GM12878 (cell line): ENCODE measurements at regions of chr5 and their contacts with region 1.

Region 1: GRCh38 chr5:88729084-88729828 is 153.7 kb downstream of the MEF2C start:
- DNase-seq: peak; percentile 73
- ATAC-seq: peak; percentile 46
- H3K4me3 ChIP-seq: no peak overlapping the region
- H3K27ac ChIP-seq: no peak overlapping the region
- H3K4me1 ChIP-seq: peaks cover 34% of the 10 kb centered on the region
- H3K27me3 ChIP-seq: no peaks in the 10 kb centered on the region
- CTCF ChIP-seq: peak; percentile 54 to 77 (median 58); a peak in 5 of 6 replicates
- EP300 ChIP-seq: no peak
- POLR2A ChIP-seq: no peak
- RAD21 ChIP-seq: peak; percentile 85

Region 2: GRCh38 chr5:88769165-88769564 is 39.9 kb after region 1 on chr5:
- CTCF ChIA-PET with region 1: interaction called, 19 read pairs
- POLR2A ChIA-PET with region 1: no interaction called
- RAD21 ChIA-PET with region 1: interaction called, 4 read pairs
- SMC1A ChIA-PET with region 1: interaction called, 7 read pairs
- in situ Hi-C with region 1: no loop called
- intact Hi-C with region 1: no loop called
- DNase-seq: no peak
- ATAC-seq: no peak
- H3K4me3 ChIP-seq: no peak overlapping the region
- H3K27ac ChIP-seq: no peak overlapping the region
- H3K4me1 ChIP-seq: peaks cover 3% of the 10 kb centered on the region; the same call in 1 of the 2 replicates
- H3K27me3 ChIP-seq: no peaks in the 10 kb centered on the region
- CTCF ChIP-seq: no peak
- EP300 ChIP-seq: no peak
- POLR2A ChIP-seq: no peak
- RAD21 ChIP-seq: no peak

Region 3: DNA sequence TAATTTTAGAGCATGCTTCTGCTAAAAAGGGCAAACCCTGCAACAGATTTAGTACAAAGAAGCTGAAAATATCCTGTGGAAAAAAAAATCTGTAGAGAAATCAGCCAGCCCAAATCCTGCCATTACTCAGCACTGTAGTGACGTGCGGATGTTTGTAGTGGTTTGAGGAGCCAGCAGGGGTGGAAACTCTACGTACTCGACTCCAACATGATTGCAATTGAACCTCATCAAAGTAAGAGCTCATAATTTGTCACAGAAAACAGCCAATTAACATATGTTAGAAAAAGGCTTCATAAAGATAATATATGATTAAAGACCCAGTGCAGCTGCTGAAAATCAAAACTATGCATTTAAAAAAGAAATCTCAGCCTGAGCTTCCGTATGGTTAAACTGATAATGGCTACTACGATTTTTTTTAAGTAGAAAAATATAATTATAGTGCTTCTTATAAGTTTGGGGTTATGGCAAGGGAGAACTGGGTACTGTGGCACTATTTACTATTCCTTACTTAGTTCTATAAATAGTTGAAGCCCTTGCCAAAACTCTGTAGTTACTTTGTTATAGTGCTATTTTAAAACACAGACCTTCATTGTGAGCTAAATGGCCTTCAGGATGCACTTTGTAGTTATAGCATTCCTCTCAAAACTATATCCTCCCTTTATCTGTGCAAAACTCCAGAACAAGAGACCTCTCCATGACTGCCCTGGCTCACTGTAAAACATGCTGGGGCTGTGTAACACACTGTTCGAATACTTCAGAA is 104.3 kb after region 1 on chr5:
- CTCF ChIA-PET with region 1: interaction called, 35 read pairs
- POLR2A ChIA-PET with region 1: interaction called, 9 read pairs
- RAD21 ChIA-PET with region 1: interaction called, 594 read pairs
- SMC1A ChIA-PET with region 1: interaction called, 591 read pairs
- in situ Hi-C with region 1: loop called (anchors 10 kb)
- intact Hi-C with region 1: no loop called
- DNase-seq: no peak
- ATAC-seq: peak; percentile 65
- H3K4me3 ChIP-seq: peak overlapping the region; percentile 39; the same call in 1 of the 2 replicates
- H3K27ac ChIP-seq: peak overlapping the region; percentile 80
- H3K4me1 ChIP-seq: peaks cover 36% of the 10 kb centered on the region
- H3K27me3 ChIP-seq: no peaks in the 10 kb centered on the region
- CTCF ChIP-seq: no peak
- EP300 ChIP-seq: peak in 1 of 2 experiments; percentile 39; a peak in 1 of 4 replicates
- POLR2A ChIP-seq: no peak
- RAD21 ChIP-seq: no peak

Region 4: DNA sequence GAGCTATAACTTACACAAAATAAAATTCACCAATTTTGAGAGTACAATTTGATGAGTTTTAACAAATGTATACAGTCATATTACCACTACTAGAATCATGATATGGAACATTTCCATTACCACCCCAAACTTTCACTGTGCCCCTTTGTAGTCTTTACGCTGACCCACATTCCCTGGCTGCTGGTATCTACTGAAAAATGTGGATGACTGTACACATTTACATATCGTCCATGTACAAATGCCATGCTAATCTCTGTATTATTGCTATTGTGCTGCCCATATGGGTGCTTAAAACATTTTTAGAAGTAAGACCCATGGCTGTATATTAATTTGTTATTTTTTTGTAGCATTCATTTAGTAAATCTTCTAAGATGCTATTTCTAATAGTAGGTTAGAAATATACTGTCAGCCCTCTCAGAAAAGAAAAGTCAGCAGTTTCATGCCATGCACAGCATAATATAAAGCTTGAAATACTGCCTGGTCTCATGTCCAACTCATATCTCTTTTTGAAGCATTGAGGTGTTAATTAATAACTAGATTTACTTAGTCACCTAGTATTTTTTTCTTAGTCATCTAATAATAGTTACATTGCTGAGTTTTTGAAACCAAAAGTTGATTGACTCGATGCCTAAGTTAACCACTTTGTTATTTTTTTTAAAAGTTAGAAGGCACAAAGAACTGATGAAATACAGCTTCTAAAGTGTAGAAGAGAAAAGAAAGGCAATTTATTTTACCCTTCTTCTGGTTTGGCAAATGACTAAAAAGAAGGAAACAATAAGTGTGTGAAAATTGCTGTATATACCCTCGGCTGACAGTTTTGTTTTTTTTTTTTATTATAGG is 342.1 kb after region 1 on chr5:
- CTCF ChIA-PET with region 1: interaction called, 26 read pairs
- POLR2A ChIA-PET with region 1: interaction called, 4 read pairs
- RAD21 ChIA-PET with region 1: interaction called, 6 read pairs
- SMC1A ChIA-PET with region 1: interaction called, 12 read pairs
- in situ Hi-C with region 1: loop called (anchors 5 kb)
- intact Hi-C with region 1: loop called (anchors 5 kb)
- DNase-seq: peak; percentile 33
- ATAC-seq: peak; percentile 92
- H3K4me3 ChIP-seq: peak overlapping the region; percentile 58
- H3K27ac ChIP-seq: peak overlapping the region; percentile 92
- H3K4me1 ChIP-seq: peaks cover 14% of the 10 kb centered on the region
- H3K27me3 ChIP-seq: no peaks in the 10 kb centered on the region
- CTCF ChIP-seq: no peak
- EP300 ChIP-seq: peak; percentile 52 to 66; a peak in 2 of 4 replicates
- POLR2A ChIP-seq: no peak
- RAD21 ChIP-seq: 0 out of 2 replicates have a peak, but pooled peaks have one; percentile 2

Region 5: GRCh38 chr5:89313804-89314588 is 584.7 kb after region 1 on chr5:
- CTCF ChIA-PET with region 1: interaction called, 5 read pairs
- POLR2A ChIA-PET with region 1: no interaction called
- RAD21 ChIA-PET with region 1: interaction called, 6 read pairs
- SMC1A ChIA-PET with region 1: interaction called, 12 read pairs
- in situ Hi-C with region 1: no loop called
- intact Hi-C with region 1: no loop called
- DNase-seq: peak; percentile 99
- ATAC-seq: peak; percentile 96
- H3K4me3 ChIP-seq: no peak overlapping the region
- H3K27ac ChIP-seq: peak overlapping the region; percentile 97
- H3K4me1 ChIP-seq: peaks cover 40% of the 10 kb centered on the region
- H3K27me3 ChIP-seq: no peaks in the 10 kb centered on the region
- CTCF ChIP-seq: no peak
- EP300 ChIP-seq: peak; percentile 95 to 98
- POLR2A ChIP-seq: peak; percentile 36; the same call in 1 of the 2 replicates
- RAD21 ChIP-seq: peak; percentile 40

Region 6: GRCh38 chr5:89930591-89931392 is 1201.5 kb after region 1 on chr5:
- CTCF ChIA-PET with region 1: no interaction called
- POLR2A ChIA-PET with region 1: no interaction called
- RAD21 ChIA-PET with region 1: interaction called, 3 read pairs
- SMC1A ChIA-PET with region 1: interaction called, 3 read pairs
- in situ Hi-C with region 1: no loop called
- intact Hi-C with region 1: loop called (anchors 10 kb)
- DNase-seq: peak; percentile 59
- ATAC-seq: peak; percentile 91
- H3K4me3 ChIP-seq: peak overlapping the region; percentile 4; the same call in 1 of the 2 replicates
- H3K27ac ChIP-seq: peak overlapping the region; percentile 70
- H3K4me1 ChIP-seq: peaks cover 12% of the 10 kb centered on the region; the same call in 1 of the 2 replicates
- H3K27me3 ChIP-seq: no peaks in the 10 kb centered on the region
- CTCF ChIP-seq: no peak
- EP300 ChIP-seq: peak; percentile 67 to 71; a peak in 2 of 4 replicates
- POLR2A ChIP-seq: no peak
- RAD21 ChIP-seq: peak; percentile 17; the same call in 1 of the 2 replicates